Activated T-helper 2 cell treated with anti-CD3 and anti-CD28 coated beads, Interferon-gamma antibody, Interleukin-2, Interleukin-4, amounts not matched to agents 10 μg/mL and 5 μg/mL and 100 μg/mL, durations not matched to agents 14 hours and 24 hours and 36 hours (primary cell): ENCODE measurements at regions of chr7 and their contacts with region 1.

Region 1: GRCh38 chr7:112939574-112940314 is 146.9 kb downstream of the GPR85 start:
- DNase-seq: peak; percentile 99
- H3K4me3 Mint-ChIP-seq: peak overlapping the region; percentile 91
- H3K27ac Mint-ChIP-seq: peak overlapping the region; percentile 94
- H3K4me1 Mint-ChIP-seq: peaks cover 27% of the 10 kb centered on the region
- H3K27me3 Mint-ChIP-seq: peaks cover 4% of the 10 kb centered on the region

Region 2: GRCh38 chr7:112449902-112450806 is 489.6 kb before region 1 on chr7 and contains the start of gene IFRD1:
- intact Hi-C with region 1: loop called (anchors 2 kb)
- DNase-seq: peak; percentile 96
- H3K4me3 Mint-ChIP-seq: peak within 1 kb of the TSS; percentile 97
- H3K27ac Mint-ChIP-seq: peak within 1 kb of the TSS; percentile 98
- H3K4me1 Mint-ChIP-seq: peaks cover 50% of the 10 kb centered on the region
- H3K27me3 Mint-ChIP-seq: no peaks in the 10 kb centered on the region
- total RNA-seq, gene IFRD1: 49.5 and 51.7 TPM in 2 replicates

Region 3: DNA sequence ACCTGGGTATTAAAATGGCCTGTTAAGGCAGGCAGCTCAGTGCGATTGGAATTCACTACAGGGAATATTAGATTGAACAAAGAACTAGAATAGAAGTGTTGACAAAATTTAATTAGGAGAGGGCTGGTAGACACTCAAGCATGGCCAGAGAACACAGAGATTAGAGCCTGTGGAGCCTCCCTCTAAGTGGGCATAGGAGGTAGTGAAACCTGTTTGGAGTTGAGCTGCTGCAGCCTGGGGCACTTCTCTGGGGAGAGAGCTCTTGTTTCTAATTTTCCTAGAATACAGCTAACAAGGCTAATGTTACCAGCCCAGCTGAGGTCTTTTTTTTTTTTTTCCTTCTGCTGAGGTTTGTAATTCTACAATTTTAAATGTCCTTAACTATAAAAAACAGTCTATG is 195.9 kb before region 1 on chr7:
- intact Hi-C with region 1: no loop called
- DNase-seq: no peak
- H3K4me3 Mint-ChIP-seq: no peak overlapping the region
- H3K27ac Mint-ChIP-seq: no peak overlapping the region
- H3K4me1 Mint-ChIP-seq: no peaks in the 10 kb centered on the region
- H3K27me3 Mint-ChIP-seq: no peaks in the 10 kb centered on the region

Region 4: DNA sequence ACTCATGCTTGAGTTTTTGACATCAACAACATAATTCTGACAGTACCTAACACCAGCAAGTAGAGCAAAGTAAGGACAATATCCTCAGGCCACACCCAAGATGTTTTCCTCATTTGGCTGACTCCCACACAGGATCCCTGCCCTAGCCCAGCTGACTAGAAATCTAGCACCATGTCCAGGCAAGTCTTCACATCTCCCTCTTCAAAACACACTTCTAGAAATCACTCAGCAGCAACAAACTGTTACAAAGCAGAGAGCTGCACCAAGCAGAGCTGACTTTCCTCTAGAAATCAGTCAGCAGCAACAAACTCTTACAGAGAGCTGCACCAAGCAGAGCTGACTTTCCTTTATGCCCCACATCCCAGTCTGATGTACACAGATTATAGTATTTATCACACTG is 157.2 kb before region 1 on chr7:
- intact Hi-C with region 1: loop called (anchors 5 kb)
- DNase-seq: no peak
- H3K4me3 Mint-ChIP-seq: no peak overlapping the region
- H3K27ac Mint-ChIP-seq: peak overlapping the region; percentile 18
- H3K4me1 Mint-ChIP-seq: peaks cover 31% of the 10 kb centered on the region
- H3K27me3 Mint-ChIP-seq: no peaks in the 10 kb centered on the region

Region 5: DNA sequence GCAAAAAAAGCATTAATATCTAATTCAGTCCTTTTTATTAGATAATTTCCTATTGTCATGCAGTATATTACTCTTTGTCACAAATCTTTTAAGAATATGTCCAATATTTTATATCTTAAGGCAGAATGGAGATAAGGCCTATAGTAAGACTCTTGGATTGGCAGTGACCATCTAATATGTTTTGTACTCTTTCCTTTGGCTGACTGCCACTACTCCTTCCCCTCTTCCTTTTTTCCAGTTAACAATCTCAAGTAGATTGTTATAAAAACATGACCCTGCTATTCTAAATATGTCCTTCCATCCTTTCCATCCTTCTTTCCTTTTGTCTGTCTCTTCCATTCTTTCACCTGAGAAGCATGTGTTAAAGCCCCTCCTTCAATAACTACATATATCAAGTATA is 56.8 kb before region 1 on chr7:
- intact Hi-C with region 1: no loop called
- DNase-seq: no peak
- H3K4me3 Mint-ChIP-seq: no peak overlapping the region
- H3K27ac Mint-ChIP-seq: no peak overlapping the region
- H3K4me1 Mint-ChIP-seq: no peaks in the 10 kb centered on the region
- H3K27me3 Mint-ChIP-seq: no peaks in the 10 kb centered on the region